ENCODE measurements at regions of chr2 and their contacts with region 1.

Region 1: DNA sequence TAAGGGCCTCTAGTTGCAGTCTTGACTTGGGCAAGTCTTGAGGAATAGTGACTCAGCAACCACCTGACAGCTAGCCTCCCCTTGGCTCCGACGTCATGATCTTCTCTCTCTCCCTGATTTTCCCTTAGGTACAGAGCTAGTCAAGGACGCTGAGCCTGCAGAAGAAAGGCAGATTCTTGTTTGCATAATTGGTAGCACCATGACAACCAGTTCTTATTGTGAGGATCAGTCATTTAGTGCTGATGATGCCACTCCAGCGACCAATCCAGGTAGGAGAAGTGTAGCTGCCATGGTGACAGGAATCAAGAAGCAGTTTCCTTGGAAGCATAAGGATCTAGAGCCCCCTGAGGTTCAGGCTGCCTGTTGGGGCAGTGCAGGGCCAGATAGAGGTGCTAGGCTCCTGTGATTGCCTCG is 2.8 kb upstream of the RESP18 start:
- DNase-seq: no peak
- H3K4me3 ChIP-seq: no peak overlapping the region
- H3K4me3 Mint-ChIP-seq: no peak overlapping the region
- H3K27ac Mint-ChIP-seq: no peak overlapping the region
- H3K4me1 ChIP-seq: no peaks in the 10 kb centered on the region
- H3K4me1 Mint-ChIP-seq: no peaks in the 10 kb centered on the region
- H3K27me3 ChIP-seq: no peaks in the 10 kb centered on the region; the same call in none of the 2 replicates
- H3K27me3 Mint-ChIP-seq: peaks cover 28% of the 10 kb centered on the region
- CTCF ChIP-seq: no peak

Region 2: GRCh38 chr2:219713108-219713507 is 377.7 kb after region 1 on chr2:
- CTCF ChIA-PET with region 1: no interaction called
- POLR2A ChIA-PET with region 1: no interaction called
- intact Hi-C with region 1: loop called (anchors 5 kb)
- DNase-seq: peak; percentile 55 to 57
- H3K4me3 ChIP-seq: no peak overlapping the region
- H3K4me3 Mint-ChIP-seq: no peak overlapping the region
- H3K27ac Mint-ChIP-seq: no peak overlapping the region
- H3K4me1 ChIP-seq: no peaks in the 10 kb centered on the region
- H3K4me1 Mint-ChIP-seq: no peaks in the 10 kb centered on the region
- H3K27me3 ChIP-seq: no peaks in the 10 kb centered on the region
- H3K27me3 Mint-ChIP-seq: peaks cover 7% of the 10 kb centered on the region
- CTCF ChIP-seq: no peak